Uterus (tissue), 4 donors: ENCODE measurements at regions of chr12 and their contacts with region 1.

Region 1: DNA sequence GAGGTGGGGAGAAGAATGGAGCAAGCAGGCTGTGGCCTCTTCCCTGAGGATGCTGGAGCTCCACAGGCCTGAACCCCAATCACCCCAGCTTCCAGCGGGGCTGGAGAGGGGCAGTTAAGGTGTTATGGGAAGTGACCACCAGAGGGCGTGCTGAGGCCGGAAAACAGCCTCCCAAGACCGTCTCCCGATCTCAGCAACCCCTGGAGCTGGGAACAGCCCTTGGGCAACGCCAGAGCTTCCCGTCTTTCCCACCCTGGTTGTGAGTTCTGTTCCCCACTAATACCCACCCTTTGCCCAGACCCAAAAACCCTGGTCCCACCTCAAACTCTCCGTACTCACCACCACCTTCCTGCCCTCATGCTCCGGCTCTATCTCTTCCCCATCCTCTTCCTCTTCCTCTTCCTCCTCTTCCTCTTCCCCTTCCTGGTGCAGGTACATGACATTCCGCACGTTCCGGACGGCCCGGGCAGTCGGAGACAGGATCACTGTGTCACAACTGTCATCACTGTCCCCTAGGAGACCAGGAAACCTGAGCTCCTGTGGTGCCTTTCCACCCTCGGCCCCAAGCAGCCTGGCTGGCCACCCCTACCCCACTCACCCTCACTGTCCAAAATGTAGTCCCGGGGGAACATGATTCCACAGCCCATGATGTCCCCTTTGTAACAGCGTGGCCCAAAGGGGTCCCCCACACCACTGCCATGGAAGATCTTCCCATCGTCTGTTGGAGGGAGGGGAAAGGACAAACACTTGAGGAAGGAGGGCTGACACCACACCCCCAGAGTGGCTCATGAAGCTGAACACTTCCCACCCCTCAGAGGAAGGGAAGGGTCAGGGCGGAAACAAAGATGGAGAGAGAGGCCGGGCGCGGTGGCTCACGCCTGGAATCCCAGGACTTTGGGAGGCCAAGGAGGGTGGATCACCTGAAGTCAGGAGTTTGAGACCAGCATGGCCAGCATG is 12.9 kb downstream of the SPRYD3 start:
- DNase-seq: peak; percentile 87 to 89
- H3K4me3 ChIP-seq: no peak overlapping the region
- H3K27ac ChIP-seq: peak overlapping the region; percentile 82 to 86
- H3K4me1 ChIP-seq: peaks cover 0 to 19% of the 10 kb centered on the region in 2 donors
- H3K27me3 ChIP-seq: no peaks in the 10 kb centered on the region
- CTCF ChIP-seq: peak; percentile 88 to 96 (median 92)
- POLR2A ChIP-seq: peak in 1 of 2 donors; percentile 26

Region 2: GRCh38 chr12:53082637-53083175 is 16.5 kb after region 1 on chr12:
- intact Hi-C with region 1: no loop called
- DNase-seq: no peak
- H3K4me3 ChIP-seq: no peak overlapping the region
- H3K27ac ChIP-seq: no peak overlapping the region
- H3K4me1 ChIP-seq: peaks cover 0 to 3% of the 10 kb centered on the region in 2 donors
- H3K27me3 ChIP-seq: no peaks in the 10 kb centered on the region
- CTCF ChIP-seq: no peak
- POLR2A ChIP-seq: no peak

Region 3: DNA sequence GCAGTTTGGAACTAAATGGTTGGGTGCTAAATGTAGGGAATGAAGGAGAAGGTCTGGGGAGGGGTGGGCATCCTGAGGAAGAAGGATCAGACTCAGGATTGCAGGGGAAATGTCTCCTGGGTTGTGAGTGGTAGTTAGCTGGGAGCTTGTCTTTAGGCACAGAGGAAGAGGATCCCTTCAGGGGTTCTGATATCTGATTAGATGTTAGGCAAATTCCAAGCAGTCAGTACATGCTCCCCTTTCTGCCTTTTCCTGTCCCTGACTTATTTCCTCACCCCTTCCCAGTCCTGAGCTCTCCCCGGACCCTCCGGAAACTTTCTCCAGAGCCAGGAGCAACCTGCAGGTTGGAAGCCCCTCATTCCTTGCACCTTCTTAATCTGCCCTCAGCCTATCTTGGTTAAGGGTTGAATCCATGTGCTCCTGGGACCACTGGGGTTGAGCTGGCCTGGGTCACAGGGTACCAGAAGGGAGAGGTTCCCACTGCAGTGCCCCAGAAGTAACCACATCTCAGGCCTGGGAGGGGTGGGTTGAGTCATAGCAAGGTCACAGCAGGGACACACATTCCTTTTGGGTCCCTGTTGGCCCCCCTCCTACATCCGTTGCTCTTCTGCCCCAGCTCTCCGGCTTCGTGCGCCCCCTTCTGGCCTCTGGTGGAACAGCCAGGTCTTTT is 32.9 kb after region 1 on chr12:
- intact Hi-C with region 1: loop called (anchors 2 kb)
- DNase-seq: peak; percentile 95 to 96
- H3K4me3 ChIP-seq: peak overlapping the region; percentile 60 to 80
- H3K27ac ChIP-seq: peak overlapping the region; percentile 94 to 95
- H3K4me1 ChIP-seq: peaks cover 0 to 11% of the 10 kb centered on the region in 2 donors
- H3K27me3 ChIP-seq: no peaks in the 10 kb centered on the region
- CTCF ChIP-seq: peak; percentile 94 to 100 (median 96)
- POLR2A ChIP-seq: peak in 1 of 2 donors; percentile 24

Region 4: GRCh38 chr12:53190108-53190729 is 124.0 kb after region 1 on chr12:
- intact Hi-C with region 1: loop called (anchors 10 kb)
- DNase-seq: peak; percentile 57 to 69
- H3K4me3 ChIP-seq: no peak overlapping the region
- H3K27ac ChIP-seq: peak overlapping the region; percentile 28 to 34
- H3K4me1 ChIP-seq: no peaks in the 10 kb centered on the region
- H3K27me3 ChIP-seq: no peaks in the 10 kb centered on the region
- CTCF ChIP-seq: peak; percentile 61 to 85 (median 72)
- POLR2A ChIP-seq: no peak

Region 5: DNA sequence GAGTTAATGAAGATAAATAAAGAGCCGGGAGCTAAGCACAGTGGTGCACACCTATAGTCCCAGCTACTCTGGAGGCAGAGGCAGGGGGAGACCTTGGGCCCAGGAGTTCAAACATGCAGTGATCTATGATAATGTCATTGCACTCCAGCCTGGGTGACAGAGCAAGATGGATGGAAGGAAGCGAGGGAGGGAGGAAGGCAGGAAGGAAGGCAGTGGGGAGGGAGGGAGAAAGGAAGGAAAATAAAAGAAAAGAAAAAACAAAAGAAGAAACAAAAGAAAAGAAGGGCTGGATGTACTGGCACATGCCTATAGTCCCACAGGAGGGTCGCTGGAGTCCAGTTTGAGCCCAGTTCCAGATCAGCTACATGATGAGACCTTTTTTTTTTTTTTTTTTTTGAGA is 288.9 kb after region 1 on chr12:
- intact Hi-C with region 1: no loop called
- DNase-seq: no peak
- H3K4me3 ChIP-seq: no peak overlapping the region
- H3K27ac ChIP-seq: no peak overlapping the region
- H3K4me1 ChIP-seq: no peaks in the 10 kb centered on the region
- H3K27me3 ChIP-seq: no peaks in the 10 kb centered on the region
- CTCF ChIP-seq: no peak
- POLR2A ChIP-seq: no peak

Region 6: GRCh38 chr12:54917001-54917488 is 1850.8 kb after region 1 on chr12:
- intact Hi-C with region 1: no loop called
- DNase-seq: no peak
- H3K4me3 ChIP-seq: no peak overlapping the region
- H3K27ac ChIP-seq: no peak overlapping the region
- H3K4me1 ChIP-seq: no peaks in the 10 kb centered on the region
- H3K27me3 ChIP-seq: no peaks in the 10 kb centered on the region
- CTCF ChIP-seq: no peak
- POLR2A ChIP-seq: no peak